ENCODE measurements at regions of chr15 and their contacts with region 1.

Region 1: GRCh38 chr15:65318870-65319356 is 14.4 kb downstream of the RNU5B-1 start:
- DNase-seq: peak; percentile 72 to 75 (median 74)
- H3K4me3 ChIP-seq: no peak overlapping the region
- H3K4me3 Mint-ChIP-seq: no peak overlapping the region
- H3K27ac ChIP-seq: no peak overlapping the region
- H3K27ac Mint-ChIP-seq: peak overlapping the region in 2 of 7 donors; percentile 11 to 60
- H3K4me1 ChIP-seq: no peaks in the 10 kb centered on the region
- H3K4me1 Mint-ChIP-seq: no peaks in the 10 kb centered on the region
- H3K27me3 ChIP-seq: no peaks in the 10 kb centered on the region
- H3K27me3 Mint-ChIP-seq: peaks cover 7 to 12% of the 10 kb centered on the region in 2 donors

Region 2: DNA sequence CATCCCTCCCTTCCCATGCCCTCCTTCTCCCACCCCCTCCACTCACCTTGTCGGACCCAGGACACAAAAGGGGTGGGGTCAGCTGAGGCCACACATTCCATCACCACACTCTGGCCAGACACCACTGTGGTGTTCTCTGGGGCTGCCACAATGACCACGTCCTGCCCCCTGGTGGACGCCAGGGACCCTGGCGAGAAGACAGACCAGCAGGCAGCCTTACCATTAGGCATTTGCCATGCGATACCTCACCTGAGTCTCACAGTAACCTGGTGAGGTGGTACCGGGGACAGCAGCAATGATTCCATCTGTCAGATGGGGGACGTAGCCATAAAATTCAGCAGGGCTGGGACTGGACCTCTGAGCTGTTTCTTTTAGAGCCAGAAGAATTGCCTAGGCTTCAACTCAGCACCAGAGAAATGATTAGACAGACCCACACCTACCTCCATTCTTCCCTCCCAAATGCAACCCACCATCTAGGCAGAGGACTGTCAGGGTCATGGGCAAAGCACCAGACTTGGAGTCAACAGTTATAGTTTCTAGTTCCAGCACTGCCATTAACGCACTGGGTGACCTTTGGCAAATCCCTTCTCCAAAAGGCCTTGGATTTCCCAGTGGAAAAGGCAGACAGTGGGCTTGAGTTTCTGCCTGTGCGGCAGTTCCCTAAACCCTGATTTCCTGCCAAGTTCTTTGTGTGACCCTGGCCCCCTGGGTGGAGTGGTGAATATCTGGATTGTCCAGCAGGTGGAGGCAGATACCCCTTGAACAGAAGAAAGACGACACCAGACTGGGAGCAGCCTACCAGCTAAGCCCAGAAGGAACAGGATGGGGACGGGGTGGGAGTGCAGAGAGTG is 82.1 kb after region 1 on chr15:
- CTCF ChIA-PET with region 1: interaction called, 6 read pairs
- POLR2A ChIA-PET with region 1: no interaction called
- intact Hi-C with region 1: loop called (anchors 1 kb)
- DNase-seq: peak in 3 of 5 donors; percentile 17 to 26 (median 23)
- H3K4me3 ChIP-seq: no peak overlapping the region
- H3K4me3 Mint-ChIP-seq: no peak overlapping the region
- H3K27ac ChIP-seq: no peak overlapping the region
- H3K27ac Mint-ChIP-seq: peak overlapping the region in 1 of 7 donors; percentile 46
- H3K4me1 ChIP-seq: no peaks in the 10 kb centered on the region
- H3K4me1 Mint-ChIP-seq: peaks cover 6 to 10% (median 7%) of the 10 kb centered on the region in 4 donors
- H3K27me3 ChIP-seq: peaks cover 3% of the 10 kb centered on the region
- H3K27me3 Mint-ChIP-seq: peaks cover 36 to 47% of the 10 kb centered on the region in 2 donors

Region 3: DNA sequence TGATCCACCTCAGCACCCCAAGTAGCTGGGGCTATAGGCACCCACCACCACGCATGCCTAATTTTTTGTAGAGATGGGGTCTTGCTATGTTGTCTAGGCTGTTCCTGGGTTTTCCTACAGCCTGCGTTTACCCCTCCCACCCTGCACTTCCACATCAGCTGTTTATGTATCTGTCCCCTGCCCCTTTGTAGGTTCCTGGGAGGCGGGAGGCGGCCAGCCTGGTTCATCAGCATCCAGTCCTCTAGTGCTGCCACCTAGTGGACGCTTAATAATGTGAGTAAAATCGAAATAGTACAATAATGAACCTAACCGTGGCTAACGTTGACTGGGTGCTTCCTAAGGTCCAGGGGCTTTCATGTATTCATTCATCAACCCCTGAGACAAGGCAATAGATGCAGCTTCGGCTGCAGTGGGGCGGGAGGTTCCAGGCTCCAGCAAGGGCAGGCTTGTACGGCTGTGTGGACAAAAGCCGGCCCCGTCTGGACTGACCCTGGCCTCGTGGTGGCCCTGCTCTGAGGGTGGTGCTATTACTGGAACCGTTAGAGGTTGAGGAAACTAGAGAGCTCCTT is 1248.1 kb after region 1 on chr15:
- CTCF ChIA-PET with region 1: no interaction called
- POLR2A ChIA-PET with region 1: no interaction called
- intact Hi-C with region 1: loop called (anchors 5 kb)
- DNase-seq: peak; percentile 40 to 48 (median 46)
- H3K4me3 ChIP-seq: no peak overlapping the region
- H3K4me3 Mint-ChIP-seq: peak overlapping the region in 3 of 8 donors; percentile 29 to 72 (median 41)
- H3K27ac ChIP-seq: no peak overlapping the region
- H3K27ac Mint-ChIP-seq: peak overlapping the region in 2 of 7 donors; percentile 2 to 88
- H3K4me1 ChIP-seq: peaks cover 5% of the 10 kb centered on the region
- H3K4me1 Mint-ChIP-seq: peaks cover 4 to 7% (median 6%) of the 10 kb centered on the region in 4 donors
- H3K27me3 ChIP-seq: no peaks in the 10 kb centered on the region
- H3K27me3 Mint-ChIP-seq: no peaks in the 10 kb centered on the region